ENCODE measurements at regions of chr20 and their contacts with region 1.

Region 1: DNA sequence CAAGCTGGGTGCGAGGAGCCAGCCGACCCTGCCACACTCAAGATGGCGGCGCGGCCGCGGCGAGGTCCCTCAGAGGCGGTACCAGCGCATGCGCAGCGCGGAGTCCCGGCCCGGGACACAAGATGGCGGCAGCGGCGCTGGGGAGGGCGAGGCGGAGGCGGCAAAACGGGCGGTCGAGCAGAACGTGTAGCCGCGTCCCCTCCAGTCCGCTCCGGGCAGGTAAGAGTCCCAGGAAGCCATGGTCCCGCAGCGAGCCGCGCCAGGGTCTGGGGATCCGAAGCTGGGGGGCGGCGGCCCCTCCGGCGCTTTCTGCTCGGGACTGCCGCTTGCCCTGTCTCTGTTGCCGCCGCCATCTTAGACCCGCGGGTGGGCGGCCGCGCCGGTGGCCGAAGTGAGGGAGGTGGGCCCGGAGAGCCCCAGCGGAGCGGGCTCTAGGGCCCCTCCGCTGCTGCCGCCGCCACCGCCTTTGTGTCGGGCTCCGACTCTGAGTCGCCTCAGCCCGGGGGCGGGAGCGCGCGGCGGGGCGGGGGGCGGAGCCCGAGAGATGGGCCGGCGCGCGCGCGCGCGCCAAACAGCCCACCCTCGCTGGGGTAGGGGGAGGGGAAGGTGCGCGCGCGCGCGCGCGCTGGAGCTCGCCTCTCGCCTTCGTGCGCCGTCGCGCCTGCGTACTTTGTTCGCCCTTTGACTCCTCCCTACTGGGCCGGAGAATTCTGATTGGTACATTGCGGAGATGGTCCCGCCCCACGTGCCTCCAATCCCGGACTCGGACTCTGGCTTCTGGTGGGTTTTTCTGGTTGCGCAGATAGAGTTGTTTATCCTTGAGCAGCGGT is at the start of gene PCIF1:
- DNase-seq: peak; percentile 96
- ATAC-seq: peak; percentile 91
- H3K4me3 ChIP-seq: peak within 1 kb of the TSS; percentile 77 to 99
- H3K27ac ChIP-seq: peak within 1 kb of the TSS; percentile 95
- H3K4me1 ChIP-seq: peaks cover 12% of the 10 kb centered on the region
- H3K27me3 ChIP-seq: no peaks in the 10 kb centered on the region
- CTCF ChIP-seq: no peak
- total RNA-seq, gene PCIF1: 24.6 TPM

Region 2: GRCh38 chr20:45833030-45833882 is 101.5 kb before region 1 on chr20 and contains the start of gene SNX21:
- CTCF ChIA-PET with region 1: no interaction called
- POLR2A ChIA-PET with region 1: interaction called, 10 read pairs
- in situ Hi-C with region 1: no loop called
- intact Hi-C with region 1: no loop called
- DNase-seq: no peak
- ATAC-seq: peak; percentile 97
- H3K4me3 ChIP-seq: peak within 1 kb of the TSS; percentile 65 to 67
- H3K27ac ChIP-seq: peak within 1 kb of the TSS; percentile 88
- H3K4me1 ChIP-seq: peaks cover 17% of the 10 kb centered on the region
- H3K27me3 ChIP-seq: no peaks in the 10 kb centered on the region
- CTCF ChIP-seq: no peak
- total RNA-seq, gene SNX21: 25.7 TPM

Region 3: DNA sequence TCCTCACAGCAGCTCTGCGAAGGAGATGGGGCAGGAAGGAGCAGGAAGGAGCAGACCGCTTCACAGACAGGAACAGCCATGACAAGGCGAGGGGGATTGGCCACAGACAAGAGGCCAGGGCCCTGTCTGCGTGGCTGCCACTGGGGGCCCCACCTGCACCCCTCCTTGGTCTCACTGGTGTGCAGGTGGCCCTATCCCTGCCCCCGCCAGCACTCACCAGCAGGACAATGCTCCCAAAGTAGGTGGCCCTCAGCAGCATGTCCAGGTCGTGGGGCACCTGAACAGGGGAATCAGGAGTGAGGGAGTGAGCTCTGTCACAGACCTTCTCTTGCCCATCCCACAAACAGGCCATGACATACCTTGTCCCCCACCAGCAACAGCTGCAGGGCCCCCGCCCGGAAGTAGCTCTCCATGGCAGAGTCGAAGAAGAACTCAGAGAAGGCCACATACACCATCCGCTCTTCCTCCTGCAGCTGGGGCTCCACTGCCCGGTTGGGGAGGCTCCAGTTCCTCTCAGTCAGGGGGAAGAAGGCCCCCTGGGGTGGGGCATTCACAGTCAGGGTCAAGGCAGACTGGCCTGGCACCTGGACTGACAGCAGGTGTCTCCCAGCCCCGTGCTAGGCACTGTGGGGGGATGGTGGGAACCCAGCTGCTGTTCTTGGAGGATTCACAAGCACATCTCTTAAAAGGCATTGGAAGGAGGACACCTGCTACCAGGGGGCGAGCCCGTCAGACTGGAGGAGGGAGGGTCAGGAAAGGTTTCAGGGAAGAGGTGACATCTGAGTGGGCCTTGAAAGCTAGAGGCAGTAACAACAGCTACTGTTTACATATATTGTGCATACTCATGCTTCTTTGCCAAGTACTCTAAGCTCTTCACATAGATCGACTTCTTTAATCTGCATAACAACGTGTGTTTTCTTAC is 30.0 kb before region 1 on chr20:
- CTCF ChIA-PET with region 1: interaction called, 4 read pairs
- POLR2A ChIA-PET with region 1: interaction called, 14 read pairs
- in situ Hi-C with region 1: no loop called
- intact Hi-C with region 1: no loop called
- DNase-seq: no peak
- ATAC-seq: no peak
- H3K4me3 ChIP-seq: no peak overlapping the region
- H3K27ac ChIP-seq: no peak overlapping the region
- H3K4me1 ChIP-seq: peaks cover 4% of the 10 kb centered on the region
- H3K27me3 ChIP-seq: no peaks in the 10 kb centered on the region
- CTCF ChIP-seq: no peak

Region 4: GRCh38 chr20:45910670-45911485 is 23.9 kb before region 1 on chr20:
- CTCF ChIA-PET with region 1: no interaction called
- POLR2A ChIA-PET with region 1: interaction called, 13 read pairs
- in situ Hi-C with region 1: no loop called
- intact Hi-C with region 1: no loop called
- DNase-seq: no peak
- ATAC-seq: peak; percentile 83
- H3K4me3 ChIP-seq: peak overlapping the region; percentile 39 to 62
- H3K27ac ChIP-seq: peak overlapping the region; percentile 44; the same call in 1 of the 2 replicates
- H3K4me1 ChIP-seq: peaks cover 18% of the 10 kb centered on the region
- H3K27me3 ChIP-seq: no peaks in the 10 kb centered on the region
- CTCF ChIP-seq: no peak

Region 5: DNA sequence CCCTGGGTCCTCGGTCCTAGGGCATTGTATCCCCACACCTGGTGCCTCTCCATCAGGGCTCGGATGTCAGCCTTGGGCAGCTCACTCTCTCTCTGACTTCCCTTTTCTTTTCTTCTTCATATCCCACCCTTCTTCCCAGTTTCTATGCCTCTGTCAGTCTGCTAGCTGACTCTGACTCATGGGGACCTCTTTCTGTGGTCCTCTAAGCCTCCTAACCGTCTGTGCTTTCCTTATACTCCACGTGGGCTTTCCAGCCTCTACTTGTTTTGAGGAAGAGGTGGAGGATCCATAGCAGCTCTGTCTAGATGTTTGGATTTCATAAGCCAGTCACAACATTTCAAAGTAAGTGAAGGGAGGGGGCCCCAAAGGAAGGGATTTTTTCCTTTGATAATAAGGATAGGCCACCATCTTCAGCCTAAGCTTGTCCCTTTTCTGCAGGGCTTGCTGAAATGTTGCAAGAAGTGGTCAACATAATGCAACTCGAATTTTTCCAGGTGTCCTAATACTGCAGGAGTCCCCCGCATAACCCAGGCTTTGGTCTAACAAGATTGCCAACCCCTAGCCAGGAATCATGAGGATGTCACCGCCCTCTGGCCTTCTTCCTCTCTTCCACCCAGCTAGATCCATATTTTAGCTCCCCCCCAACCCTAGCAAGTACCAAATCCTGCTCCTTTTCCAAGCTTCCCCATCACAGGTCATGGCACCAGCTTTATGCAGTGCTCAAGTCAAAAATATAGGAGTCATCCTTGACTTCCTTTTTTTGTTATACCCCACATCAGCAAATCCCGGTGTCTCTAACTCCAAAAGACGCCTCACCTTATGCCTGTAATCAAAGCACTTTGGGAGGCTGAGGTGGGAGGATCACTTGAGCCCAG is 14.1 kb before region 1 on chr20:
- CTCF ChIA-PET with region 1: no interaction called
- POLR2A ChIA-PET with region 1: interaction called, 14 read pairs
- in situ Hi-C with region 1: no loop called
- intact Hi-C with region 1: no loop called
- DNase-seq: no peak
- ATAC-seq: no peak
- H3K4me3 ChIP-seq: no peak overlapping the region
- H3K27ac ChIP-seq: no peak overlapping the region
- H3K4me1 ChIP-seq: no peaks in the 10 kb centered on the region
- H3K27me3 ChIP-seq: no peaks in the 10 kb centered on the region
- CTCF ChIP-seq: no peak

Region 6: DNA sequence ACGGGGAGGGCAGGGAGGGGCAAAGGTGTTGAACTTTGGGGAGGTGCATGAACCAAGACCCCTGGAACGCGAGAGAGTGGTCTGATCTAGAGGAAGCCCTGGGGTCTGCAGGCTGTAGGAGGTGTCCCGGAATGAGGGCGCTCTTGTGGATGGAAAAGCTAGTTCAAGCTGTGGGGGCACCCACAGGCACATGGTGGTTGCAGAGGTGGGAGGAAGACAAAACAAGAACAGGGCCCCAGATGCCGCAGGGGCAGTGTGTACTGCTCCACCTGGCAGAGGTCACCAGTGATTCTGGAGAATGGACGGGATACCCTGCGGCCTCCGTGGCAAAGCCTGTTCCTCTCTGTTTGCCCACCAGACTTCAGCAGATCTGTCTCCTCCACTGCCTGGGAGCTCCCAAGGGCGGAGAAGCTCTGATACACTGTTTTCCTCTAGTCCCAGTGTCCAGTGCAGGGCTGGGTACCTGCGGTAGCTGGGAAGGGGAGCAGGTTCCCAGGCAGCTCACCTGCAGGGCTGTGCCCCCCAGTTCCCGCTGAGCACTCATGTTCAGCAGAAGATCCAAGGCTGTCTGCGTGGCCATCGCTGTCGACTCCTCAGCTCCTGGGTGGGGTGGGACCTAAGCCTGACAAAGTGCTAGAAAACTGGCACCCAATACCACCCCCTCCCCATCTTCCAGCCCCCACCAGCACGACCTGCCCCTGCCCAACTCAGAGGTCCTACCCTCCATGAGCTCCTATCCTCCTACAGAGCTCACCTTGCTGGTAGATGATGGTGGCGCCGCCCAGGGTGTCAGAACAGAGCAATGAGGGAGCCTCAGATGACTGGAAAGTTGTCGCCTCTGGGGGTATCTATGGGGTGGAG is 22.5 kb after region 1 on chr20:
- CTCF ChIA-PET with region 1: interaction called, 13 read pairs
- POLR2A ChIA-PET with region 1: no interaction called
- in situ Hi-C with region 1: no loop called
- intact Hi-C with region 1: no loop called
- DNase-seq: no peak
- ATAC-seq: no peak; the same call in 1 of the 2 replicates
- H3K4me3 ChIP-seq: no peak overlapping the region
- H3K27ac ChIP-seq: no peak overlapping the region
- H3K4me1 ChIP-seq: no peaks in the 10 kb centered on the region
- H3K27me3 ChIP-seq: no peaks in the 10 kb centered on the region
- CTCF ChIP-seq: no peak